ENCODE measurements at regions of chr12 and their contacts with region 1.

Region 1: DNA sequence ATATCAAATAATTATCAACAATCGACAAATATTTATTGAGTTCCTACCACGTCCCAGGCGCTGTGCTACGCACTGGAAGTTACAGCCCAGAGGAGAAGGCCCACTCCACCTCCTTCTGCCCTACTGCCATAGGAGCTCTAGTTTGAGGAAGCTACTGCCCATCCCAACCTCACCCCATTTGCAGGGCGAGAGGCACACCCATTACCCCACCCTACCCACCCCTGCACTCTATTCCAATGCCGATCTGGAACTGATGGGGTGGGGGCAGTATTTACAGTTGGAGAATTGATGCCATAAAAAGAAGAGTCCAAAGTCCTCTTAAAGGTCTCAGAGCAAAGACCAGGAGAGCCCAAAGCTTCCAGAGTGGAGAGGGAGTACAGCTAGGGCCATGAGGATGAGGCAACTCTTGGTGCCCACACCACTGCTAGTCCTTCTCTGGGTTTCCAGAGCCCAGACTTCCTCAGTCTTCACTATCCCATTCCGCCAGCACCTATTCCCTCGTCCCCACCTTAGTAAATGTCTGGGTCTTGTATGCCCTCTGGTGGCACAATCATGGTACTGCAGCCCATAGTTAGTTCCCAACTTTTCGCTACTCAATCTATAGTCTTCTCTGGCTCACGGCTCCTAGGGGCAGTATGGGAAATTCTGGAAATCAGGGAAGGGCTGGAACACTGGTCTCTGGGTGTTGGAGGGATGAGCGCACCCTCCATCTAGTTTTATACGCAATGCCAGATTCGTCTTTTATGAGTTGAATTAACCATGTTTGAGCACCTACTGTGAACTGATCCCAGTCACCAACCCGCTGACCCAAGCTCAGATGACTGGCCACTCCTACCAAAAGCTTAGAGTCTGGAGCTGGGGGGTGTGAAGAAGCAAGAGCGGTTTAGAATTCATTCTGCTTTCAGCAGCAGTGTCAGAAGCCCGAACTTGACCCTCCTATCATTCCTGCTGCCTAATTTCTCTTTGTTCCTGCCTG is 6.9 kb upstream of the ADCY6 start:
- DNase-seq: peak; percentile 72
- H3K4me3 Mint-ChIP-seq: no peak overlapping the region
- H3K27ac Mint-ChIP-seq: no peak overlapping the region
- H3K4me1 Mint-ChIP-seq: no peaks in the 10 kb centered on the region
- H3K27me3 Mint-ChIP-seq: peaks cover 8% of the 10 kb centered on the region

Region 2: DNA sequence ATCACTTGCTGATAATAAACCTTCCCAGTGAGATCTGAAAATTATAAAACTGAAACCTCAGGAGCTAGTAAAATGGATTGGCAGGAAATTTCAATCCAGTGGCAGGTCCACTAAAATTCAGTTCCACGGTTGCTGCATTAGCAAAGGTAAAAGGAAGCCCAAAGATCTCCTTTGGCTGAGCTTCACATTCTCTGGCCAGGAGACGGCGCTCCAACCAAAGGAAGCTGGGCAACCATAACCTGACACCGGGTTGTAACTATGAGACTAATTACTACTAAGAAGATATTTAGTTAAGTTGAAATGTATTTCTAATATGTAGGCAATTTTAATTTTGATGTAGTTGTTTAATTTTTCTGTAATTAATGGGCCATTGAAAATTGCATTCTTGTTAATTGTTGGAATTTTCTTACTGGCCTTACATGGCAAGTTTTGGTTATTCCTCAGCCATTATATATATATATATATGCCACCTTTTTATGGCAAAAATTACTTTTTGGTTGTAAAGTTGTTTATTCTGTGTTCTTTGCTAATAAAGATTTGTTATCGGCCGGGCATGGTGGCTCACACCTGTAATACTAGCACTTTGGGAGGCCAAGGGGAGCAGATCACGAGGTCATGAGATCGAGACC is 253.4 kb before region 1 on chr12:
- CTCF ChIA-PET with region 1: interaction called, 18 read pairs
- DNase-seq: peak; percentile 71
- H3K4me3 Mint-ChIP-seq: no peak overlapping the region
- H3K27ac Mint-ChIP-seq: no peak overlapping the region
- H3K4me1 Mint-ChIP-seq: no peaks in the 10 kb centered on the region
- H3K27me3 Mint-ChIP-seq: peaks cover 3% of the 10 kb centered on the region

Region 3: DNA sequence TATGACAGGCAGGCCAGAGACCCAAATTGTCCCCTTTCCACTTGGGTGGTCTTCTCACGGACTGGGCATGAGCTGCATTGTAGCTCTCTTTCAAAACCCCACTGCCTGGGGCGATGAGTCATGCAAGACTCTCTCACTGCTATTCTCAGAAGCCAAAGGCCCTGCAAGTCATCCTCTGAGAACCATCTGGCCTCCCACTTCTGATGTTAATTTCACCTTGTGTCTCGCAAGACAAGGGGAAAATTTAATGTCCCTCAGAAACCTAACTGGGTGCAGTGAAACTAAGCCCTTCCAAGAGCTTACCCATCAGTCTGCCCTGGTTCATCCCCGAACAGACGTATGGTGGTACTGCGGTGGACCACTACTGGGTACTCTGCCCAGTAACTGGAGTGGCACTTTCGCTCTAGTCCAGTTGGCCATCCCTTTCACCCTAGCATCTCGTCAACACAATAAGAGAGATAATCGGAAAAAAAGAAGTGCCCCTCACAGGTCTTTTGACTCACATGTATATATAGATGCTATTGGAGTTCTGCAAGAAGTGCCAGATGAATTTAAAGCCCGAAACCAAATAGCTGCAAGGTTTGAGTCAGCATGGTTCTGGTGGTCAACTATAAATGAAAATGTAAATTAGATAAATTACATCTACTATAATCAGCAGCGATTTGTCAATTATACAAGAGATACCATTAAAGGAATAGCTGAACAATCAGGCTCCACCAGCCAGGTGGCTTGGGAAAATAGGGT is 194.6 kb before region 1 on chr12:
- CTCF ChIA-PET with region 1: no interaction called
- DNase-seq: no peak
- H3K4me3 Mint-ChIP-seq: no peak overlapping the region
- H3K27ac Mint-ChIP-seq: no peak overlapping the region
- H3K4me1 Mint-ChIP-seq: peaks cover 4% of the 10 kb centered on the region
- H3K27me3 Mint-ChIP-seq: peaks cover 12% of the 10 kb centered on the region

Region 4: DNA sequence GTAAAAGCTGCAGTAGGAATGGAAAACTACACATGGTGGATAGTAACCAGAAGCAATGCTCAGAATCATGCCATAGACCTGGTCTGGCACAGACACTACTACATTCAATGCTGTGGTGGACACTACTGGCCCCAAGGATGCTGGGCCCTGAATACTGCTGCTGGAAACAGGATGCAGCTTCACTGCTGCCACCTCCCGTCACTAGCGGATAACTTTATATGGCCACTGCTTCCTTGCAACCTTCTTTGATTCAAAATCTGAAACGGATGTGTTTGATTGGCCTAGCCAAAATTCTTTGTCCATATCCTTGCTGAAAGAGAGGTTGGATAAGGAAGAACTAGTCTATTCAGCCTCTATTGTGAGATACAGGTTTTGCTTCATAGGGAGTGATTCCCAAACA is 37.5 kb before region 1 on chr12:
- CTCF ChIA-PET with region 1: interaction called, 187 read pairs
- DNase-seq: no peak
- H3K4me3 Mint-ChIP-seq: no peak overlapping the region
- H3K27ac Mint-ChIP-seq: no peak overlapping the region
- H3K4me1 Mint-ChIP-seq: no peaks in the 10 kb centered on the region
- H3K27me3 Mint-ChIP-seq: peaks cover 11% of the 10 kb centered on the region

Region 5: DNA sequence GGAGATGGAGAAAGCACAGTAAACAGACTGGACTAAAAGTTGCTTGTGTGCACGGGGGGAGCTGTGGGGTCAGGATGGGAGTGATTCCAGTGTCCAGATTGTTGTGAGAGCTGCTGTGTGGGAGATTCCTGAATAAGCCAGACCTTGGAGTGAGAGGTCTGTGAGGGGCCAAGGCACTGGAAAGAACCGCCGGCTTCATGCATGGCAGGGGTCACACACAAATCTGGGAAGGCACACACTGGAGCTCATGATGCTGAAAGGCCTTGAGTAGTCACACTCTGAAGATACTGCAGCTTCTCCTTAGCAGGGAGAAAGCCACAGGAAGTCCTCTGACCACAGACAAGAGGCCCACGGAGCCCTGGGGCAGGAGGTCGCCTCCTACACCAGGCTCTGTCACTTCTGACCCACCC is 30.0 kb before region 1 on chr12:
- CTCF ChIA-PET with region 1: interaction called, 187 read pairs
- DNase-seq: peak; percentile 28
- H3K4me3 Mint-ChIP-seq: no peak overlapping the region
- H3K27ac Mint-ChIP-seq: no peak overlapping the region
- H3K4me1 Mint-ChIP-seq: peaks cover 12% of the 10 kb centered on the region
- H3K27me3 Mint-ChIP-seq: peaks cover 48% of the 10 kb centered on the region

Measured in activated naive CD4-positive, alpha-beta T cell treated with anti-CD3 and anti-CD28 coated beads, Interleukin-2, amount 10 ng/mL, durations not matched to agents 7 days and 5 days (primary cell).